Left ventricle myocardium superior (tissue), 1 donor: ENCODE measurements at regions of chr9 and their contacts with region 1.

Region 1: GRCh38 chr9:17116400-17116837 is 18.4 kb upstream of the CNTLN start:
- DNase-seq: no peak
- ATAC-seq: peak; percentile 41

Region 2: DNA sequence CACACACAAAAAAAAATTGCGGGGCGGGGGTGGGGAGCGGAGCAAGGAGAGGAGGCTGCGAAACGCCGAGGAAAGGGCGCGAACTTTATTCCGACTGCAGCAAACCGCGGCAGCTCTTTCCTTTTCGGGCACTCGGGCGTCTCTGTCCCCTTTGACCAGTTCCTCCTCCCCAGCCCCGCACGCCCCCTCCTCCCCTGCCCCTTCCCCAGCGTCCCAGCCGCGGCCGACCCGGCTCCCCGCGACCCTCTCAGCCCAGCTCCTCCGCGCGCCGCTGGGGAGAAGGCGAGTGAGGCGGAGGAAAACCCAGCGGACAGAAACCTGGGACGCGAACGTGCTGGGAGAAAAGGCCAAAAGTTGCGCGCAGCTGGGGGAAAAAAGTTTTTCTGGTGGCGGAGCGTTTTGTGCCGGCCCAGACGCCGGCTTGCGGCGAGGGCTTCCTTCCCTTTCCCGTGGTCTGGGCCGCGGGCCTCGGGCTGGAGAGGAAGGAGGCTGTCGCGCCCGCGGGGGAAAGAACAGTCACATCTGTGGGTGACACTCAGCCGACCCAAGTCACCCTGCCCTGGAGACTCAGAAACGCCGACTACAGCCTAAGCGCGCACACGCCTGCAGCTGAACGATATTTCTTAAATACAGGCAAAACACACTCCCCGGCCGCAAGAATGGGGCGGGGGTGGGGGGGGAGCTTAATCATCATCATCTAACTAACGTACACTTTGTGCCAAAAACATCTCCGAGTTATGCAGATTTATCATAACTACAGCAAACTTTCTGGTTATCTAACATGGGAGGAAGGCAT is 244.9 kb before region 1 on chr9:
- intact Hi-C with region 1: no loop called
- DNase-seq: peak; percentile 69
- ATAC-seq: peak; percentile 59

Region 3: DNA sequence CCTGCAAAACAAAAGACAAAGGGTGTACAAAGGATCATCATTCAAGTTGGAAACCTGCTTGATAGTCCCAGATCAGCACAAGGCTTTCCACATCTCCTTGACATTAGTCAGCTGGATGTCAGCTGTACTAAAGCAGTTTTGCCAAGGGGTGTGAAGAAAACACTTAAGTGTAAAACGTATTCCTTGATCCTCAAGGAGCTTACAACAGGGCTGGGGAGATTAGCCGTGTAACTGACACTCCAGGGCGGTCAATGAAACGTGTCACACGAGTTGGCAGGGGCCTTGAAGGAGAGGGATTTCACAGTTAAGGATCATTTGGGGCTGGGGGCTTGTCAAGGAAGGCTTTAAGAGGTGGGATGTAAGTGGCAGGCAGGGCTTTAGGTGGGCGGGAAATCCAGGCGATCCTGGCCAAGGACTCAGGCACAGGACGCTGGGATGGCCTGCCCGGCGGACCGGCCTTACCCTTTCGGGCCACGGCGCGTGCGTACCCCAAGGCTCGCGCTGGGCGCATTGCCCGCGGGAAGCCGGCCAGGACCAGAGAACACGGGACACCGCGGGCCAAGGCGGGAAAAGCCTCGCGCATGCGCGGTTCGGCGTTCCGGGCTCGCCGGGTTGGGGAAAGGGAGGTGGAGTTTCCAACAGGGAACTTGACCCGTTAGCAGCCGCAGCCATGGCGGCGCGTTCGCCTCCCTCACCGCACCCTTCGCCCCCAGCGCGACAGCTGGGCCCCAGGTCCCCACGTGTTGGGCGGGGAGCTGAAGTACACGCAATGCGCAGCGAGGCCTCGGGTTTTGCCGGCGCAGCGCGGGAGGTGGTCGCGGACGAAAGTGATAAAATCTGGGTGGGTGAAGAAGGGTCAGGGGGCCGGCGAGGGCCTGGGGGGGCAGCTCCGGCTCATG is 18.2 kb after region 1 on chr9 and contains the start of gene CNTLN:
- intact Hi-C with region 1: no loop called
- DNase-seq: peak; percentile 99
- ATAC-seq: peak; percentile 98
- total RNA-seq, gene CNTLN: 4.2 TPM

Region 4: DNA sequence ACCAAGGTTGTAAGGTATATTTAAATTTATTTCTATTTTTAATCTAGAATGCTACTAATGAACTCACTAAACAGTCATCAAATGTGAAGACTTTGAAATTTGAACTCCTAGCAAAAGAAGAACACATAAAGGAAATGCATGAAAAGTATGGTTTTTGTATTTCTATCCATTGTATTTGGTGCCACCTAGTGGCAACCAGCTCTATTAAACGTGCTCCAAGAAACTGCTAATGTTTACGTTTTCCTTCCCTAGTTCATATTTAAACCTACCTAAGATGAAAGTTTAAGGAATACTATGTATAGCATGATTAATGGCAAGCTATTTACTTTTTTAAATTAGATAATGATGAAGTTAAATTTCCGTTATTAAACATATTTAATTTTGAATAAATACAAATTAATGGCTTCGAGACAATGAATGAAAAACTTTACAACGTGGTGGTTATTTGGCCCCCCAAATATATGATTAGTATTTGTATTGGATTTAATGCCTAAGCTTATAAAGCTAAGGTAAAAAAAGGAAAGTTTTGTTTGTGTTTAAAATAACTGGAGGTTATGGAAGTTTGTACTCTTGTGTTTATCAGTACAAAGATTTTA is 346.5 kb after region 1 on chr9:
- intact Hi-C with region 1: loop called (anchors 2 kb)
- DNase-seq: no peak
- ATAC-seq: no peak